ENCODE measurements at regions of chr6 and their contacts with region 1.

Region 1: GRCh38 chr6:26537846-26538571 is at the start of gene HMGN4:
- DNase-seq: peak; percentile 88
- H3K4me3 Mint-ChIP-seq: peak within 1 kb of the TSS; percentile 84
- H3K27ac Mint-ChIP-seq: peak within 1 kb of the TSS; percentile 97
- H3K4me1 Mint-ChIP-seq: peaks cover 64% of the 10 kb centered on the region
- H3K27me3 Mint-ChIP-seq: peaks cover 2% of the 10 kb centered on the region
- total RNA-seq, gene HMGN4: 93.2 to 96.0 TPM

Region 2: DNA sequence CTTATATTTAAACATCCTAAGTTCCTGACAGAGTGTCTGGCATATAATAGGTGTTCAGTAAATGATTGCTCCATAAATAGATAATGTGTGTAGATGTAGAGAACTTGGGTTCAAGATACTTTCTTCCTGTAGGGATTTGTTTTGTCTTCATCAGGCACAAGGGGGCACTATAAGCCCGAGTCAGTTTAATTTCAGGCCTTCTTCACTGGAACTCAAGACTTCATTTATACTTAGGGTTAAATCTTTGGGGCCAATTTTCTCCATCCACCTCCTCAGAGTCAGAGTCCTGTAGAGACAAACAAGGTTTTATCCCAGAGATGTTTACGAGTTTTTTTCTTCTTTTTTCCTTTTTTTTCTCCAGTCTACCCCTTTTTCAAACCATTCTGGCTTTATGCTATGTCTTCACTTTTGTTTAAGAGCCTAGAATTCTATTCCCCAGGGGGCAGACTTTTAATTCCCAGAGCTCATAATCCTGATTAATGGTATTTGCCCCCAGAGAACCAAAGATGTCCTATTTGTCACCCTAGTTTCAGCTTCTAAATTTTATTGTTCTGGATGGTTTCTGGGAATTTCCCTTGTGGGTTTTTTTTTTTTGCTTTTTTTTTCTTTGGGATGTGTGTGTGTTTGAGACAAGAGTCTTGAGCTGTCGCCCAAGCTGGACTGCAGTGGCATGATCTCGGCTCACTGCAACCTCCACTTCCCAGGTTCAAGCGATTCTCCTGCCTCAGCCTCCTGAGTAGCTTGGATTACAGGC is 362.4 kb before region 1 on chr6:
- CTCF ChIA-PET with region 1: no interaction called
- POLR2A ChIA-PET with region 1: no interaction called
- intact Hi-C with region 1: loop called (anchors 10 kb)
- DNase-seq: peak; percentile 63
- H3K4me3 Mint-ChIP-seq: peak overlapping the region; percentile 24
- H3K27ac Mint-ChIP-seq: peak overlapping the region; percentile 43
- H3K4me1 Mint-ChIP-seq: peaks cover 31% of the 10 kb centered on the region
- H3K27me3 Mint-ChIP-seq: no peaks in the 10 kb centered on the region

Region 3: GRCh38 chr6:26351544-26351953 is 186.5 kb before region 1 on chr6:
- CTCF ChIA-PET with region 1: no interaction called
- POLR2A ChIA-PET with region 1: no interaction called
- intact Hi-C with region 1: no loop called
- DNase-seq: no peak
- H3K4me3 Mint-ChIP-seq: no peak overlapping the region
- H3K27ac Mint-ChIP-seq: no peak overlapping the region
- H3K4me1 Mint-ChIP-seq: no peaks in the 10 kb centered on the region
- H3K27me3 Mint-ChIP-seq: no peaks in the 10 kb centered on the region

Region 4: DNA sequence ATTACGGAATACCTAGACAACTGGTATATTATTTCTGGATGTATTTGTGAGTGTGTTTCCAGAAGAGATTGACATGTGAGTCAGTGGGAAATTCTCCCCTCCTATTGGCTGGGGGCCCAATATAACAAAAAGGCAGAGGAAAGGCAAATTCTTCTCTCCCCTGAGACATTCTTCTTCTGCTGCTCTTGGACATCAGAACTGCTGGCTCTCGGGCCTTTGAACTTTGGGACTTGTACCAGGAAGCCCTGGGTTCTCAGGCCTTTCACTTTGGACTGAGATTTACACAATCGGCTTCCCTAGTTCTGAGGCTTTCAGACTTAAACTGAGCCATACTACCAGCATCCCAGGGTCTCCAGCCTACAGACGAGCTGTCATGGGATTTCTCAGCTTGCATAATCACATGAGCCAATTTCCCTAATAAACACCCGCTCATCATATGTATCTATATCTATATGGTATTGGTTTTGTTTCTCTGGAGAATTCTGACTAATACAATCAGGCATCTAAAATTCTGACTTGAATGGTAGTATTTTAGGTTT is 105.3 kb before region 1 on chr6:
- CTCF ChIA-PET with region 1: no interaction called
- POLR2A ChIA-PET with region 1: no interaction called
- intact Hi-C with region 1: no loop called
- DNase-seq: no peak
- H3K4me3 Mint-ChIP-seq: no peak overlapping the region
- H3K27ac Mint-ChIP-seq: no peak overlapping the region
- H3K4me1 Mint-ChIP-seq: no peaks in the 10 kb centered on the region
- H3K27me3 Mint-ChIP-seq: no peaks in the 10 kb centered on the region

Region 5: DNA sequence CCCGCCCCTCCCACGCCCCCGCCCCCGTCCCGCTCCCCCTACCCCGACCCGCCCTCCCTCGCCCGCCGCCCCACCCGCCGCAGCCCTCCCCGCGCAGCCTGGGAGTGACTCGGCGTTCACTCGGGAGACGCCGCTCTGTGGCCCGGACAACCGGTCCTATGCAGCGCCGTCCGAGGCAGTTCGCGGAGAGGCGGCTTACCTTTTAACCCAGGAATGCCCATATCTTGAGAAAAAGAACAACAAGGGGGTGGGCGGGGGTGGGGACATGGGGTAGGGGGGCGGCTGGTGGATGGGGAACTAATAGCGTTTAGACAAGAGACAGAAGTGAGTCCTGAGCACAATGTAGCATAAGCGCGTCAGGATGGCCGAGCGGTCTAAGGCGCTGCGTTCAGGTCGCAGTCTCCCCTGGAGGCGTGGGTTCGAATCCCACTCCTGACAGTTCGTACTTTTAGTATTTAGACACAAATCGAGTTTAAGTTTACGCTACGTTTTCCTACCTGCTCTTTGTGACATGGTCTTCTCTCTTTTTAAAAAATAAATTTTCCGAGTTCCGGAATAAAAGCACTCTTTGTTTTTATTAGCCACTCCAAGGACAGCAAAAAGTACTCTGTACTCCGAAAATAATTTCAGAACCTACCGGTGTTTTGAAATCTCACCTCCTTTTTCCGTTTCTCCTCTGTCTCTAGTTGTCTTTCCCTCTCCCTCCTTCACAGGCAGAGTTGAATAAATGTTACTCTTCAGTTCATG is 17.0 kb before region 1 on chr6:
- CTCF ChIA-PET with region 1: interaction called, 9 read pairs
- POLR2A ChIA-PET with region 1: interaction called, 5 read pairs
- intact Hi-C with region 1: loop called (anchors 1 kb)
- DNase-seq: peak; percentile 89
- H3K4me3 Mint-ChIP-seq: peak overlapping the region; percentile 72
- H3K27ac Mint-ChIP-seq: peak overlapping the region; percentile 81
- H3K4me1 Mint-ChIP-seq: peaks cover 30% of the 10 kb centered on the region
- H3K27me3 Mint-ChIP-seq: peaks cover 1% of the 10 kb centered on the region

Region 6: DNA sequence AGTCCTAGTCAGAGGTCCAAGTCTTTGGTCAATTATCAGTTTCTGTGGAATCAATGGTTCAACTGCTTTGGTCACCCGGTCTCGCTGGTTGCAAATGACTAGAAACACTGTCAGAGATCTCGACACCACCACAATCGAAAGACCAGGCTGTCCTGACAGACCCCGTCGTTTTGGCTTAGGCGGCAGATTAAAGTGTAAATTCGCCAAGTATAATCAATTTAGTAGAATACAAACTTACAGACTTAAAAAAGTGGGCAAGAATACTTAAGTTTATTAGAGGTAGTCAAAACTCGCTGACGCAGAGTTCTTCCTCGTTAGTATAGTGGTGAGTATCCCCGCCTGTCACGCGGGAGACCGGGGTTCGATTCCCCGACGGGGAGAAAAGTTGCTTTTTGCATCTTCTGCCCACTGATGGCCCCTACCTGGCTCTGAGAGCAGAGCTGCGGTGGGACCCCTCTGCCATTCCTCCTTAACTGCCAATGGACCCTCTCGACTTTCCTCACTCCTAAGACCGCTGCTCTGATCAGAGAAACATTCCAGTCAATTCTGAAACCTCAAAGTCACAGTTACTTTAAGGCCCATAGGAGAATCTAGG is 965.5 kb after region 1 on chr6:
- CTCF ChIA-PET with region 1: no interaction called
- POLR2A ChIA-PET with region 1: no interaction called
- intact Hi-C with region 1: loop called (anchors 10 kb)
- DNase-seq: peak; percentile 86
- H3K4me3 Mint-ChIP-seq: peak overlapping the region; percentile 88
- H3K27ac Mint-ChIP-seq: peak overlapping the region; percentile 85
- H3K4me1 Mint-ChIP-seq: peaks cover 26% of the 10 kb centered on the region
- H3K27me3 Mint-ChIP-seq: peaks cover 10% of the 10 kb centered on the region

Measured in activated CD4-positive, alpha-beta memory T cell treated with anti-CD3 and anti-CD28 coated beads for 36 hours (primary cell).